Activated CD4-positive, alpha-beta T cell treated with anti-CD3 and anti-CD28 coated beads for 36 hours (primary cell): ENCODE measurements at regions of chr14 and their contacts with region 1.

Region 1: GRCh38 chr14:101917413-101918017 is 46.9 kb upstream of the DYNC1H1 start:
- DNase-seq: no peak
- ATAC-seq: no peak
- H3K4me3 Mint-ChIP-seq: no peak overlapping the region
- H3K27ac Mint-ChIP-seq: no peak overlapping the region
- H3K4me1 Mint-ChIP-seq: no peaks in the 10 kb centered on the region
- H3K27me3 Mint-ChIP-seq: no peaks in the 10 kb centered on the region

Region 2: DNA sequence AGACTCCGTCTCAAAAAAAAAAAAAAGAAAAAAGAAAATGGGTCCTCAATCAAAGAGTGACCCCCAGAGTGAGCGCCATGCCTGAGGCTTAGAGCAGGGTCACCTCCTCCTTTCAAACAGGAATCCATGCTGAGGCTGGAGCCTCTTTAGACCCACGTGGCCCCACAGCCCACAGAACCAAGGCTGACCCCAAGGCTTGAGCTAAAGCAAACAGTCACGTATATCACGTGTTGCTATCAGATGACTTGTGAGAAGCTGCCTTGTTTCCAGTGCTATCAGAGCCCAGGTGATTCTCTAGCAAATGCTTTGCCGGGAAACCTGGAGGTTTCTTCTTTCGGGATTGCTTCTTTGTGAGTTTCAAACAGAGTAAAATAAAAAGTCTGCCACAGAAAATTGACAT is 15.2 kb after region 1 on chr14:
- CTCF ChIA-PET with region 1: no interaction called
- POLR2A ChIA-PET with region 1: no interaction called
- intact Hi-C with region 1: loop called in 1 of 2 experiments (anchors 1 kb)
- DNase-seq: no peak
- ATAC-seq: no peak
- H3K4me3 Mint-ChIP-seq: no peak overlapping the region
- H3K27ac Mint-ChIP-seq: no peak overlapping the region
- H3K4me1 Mint-ChIP-seq: no peaks in the 10 kb centered on the region
- H3K27me3 Mint-ChIP-seq: no peaks in the 10 kb centered on the region